Activated T-helper 1 cell treated with anti-CD3 and anti-CD28 coated beads, Interleukin-12 subunit alpha, Interleukin-12 subunit beta, Interleukin-2, Interleukin-4 antibody, amounts not matched to agents 30 ng/mL and 10 ng/mL and 1 ng/mL, durations not matched to agents 14 hours and 24 hours and 36 hours (primary cell): ENCODE measurements at regions of chr15 and their contacts with region 1.

Region 1: GRCh38 chr15:48861813-48862431 is 16.0 kb upstream of the EID1 start:
- DNase-seq: peak; percentile 25
- H3K4me3 Mint-ChIP-seq: no peak overlapping the region
- H3K27ac Mint-ChIP-seq: no peak overlapping the region
- H3K4me1 Mint-ChIP-seq: peaks cover 27% of the 10 kb centered on the region
- H3K27me3 Mint-ChIP-seq: peaks cover 6% of the 10 kb centered on the region

Region 2: GRCh38 chr15:48358229-48358641 is 503.7 kb before region 1 on chr15:
- intact Hi-C with region 1: loop called (anchors 5 kb)
- DNase-seq: no peak
- H3K4me3 Mint-ChIP-seq: no peak overlapping the region
- H3K27ac Mint-ChIP-seq: no peak overlapping the region
- H3K4me1 Mint-ChIP-seq: peaks cover 16% of the 10 kb centered on the region
- H3K27me3 Mint-ChIP-seq: peaks cover 6% of the 10 kb centered on the region

Region 3: DNA sequence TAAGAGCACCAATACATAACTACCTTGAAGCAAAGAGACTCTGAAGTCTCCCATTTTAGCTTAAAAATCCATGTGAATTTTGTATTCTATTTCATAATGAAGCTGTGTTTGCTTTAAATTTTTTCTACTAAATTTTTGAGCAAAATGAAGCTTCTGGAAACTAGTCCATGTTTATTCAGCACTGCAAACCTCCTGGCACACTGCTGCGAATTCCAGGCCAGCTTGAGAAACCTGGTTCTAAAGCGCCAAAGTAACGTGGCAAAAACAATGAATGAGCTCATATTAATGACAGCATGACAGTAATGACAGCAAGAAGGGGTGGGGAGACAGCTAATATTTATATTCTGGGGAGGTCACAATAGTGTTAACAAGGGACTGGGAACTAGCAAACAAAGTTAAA is 76.7 kb before region 1 on chr15:
- intact Hi-C with region 1: no loop called
- DNase-seq: no peak
- H3K4me3 Mint-ChIP-seq: no peak overlapping the region
- H3K27ac Mint-ChIP-seq: no peak overlapping the region
- H3K4me1 Mint-ChIP-seq: no peaks in the 10 kb centered on the region
- H3K27me3 Mint-ChIP-seq: no peaks in the 10 kb centered on the region

Region 4: GRCh38 chr15:48823237-48823636 is 38.7 kb before region 1 on chr15:
- intact Hi-C with region 1: no loop called
- DNase-seq: no peak
- H3K4me3 Mint-ChIP-seq: no peak overlapping the region
- H3K27ac Mint-ChIP-seq: no peak overlapping the region
- H3K4me1 Mint-ChIP-seq: no peaks in the 10 kb centered on the region
- H3K27me3 Mint-ChIP-seq: peaks cover 7% of the 10 kb centered on the region

Region 5: DNA sequence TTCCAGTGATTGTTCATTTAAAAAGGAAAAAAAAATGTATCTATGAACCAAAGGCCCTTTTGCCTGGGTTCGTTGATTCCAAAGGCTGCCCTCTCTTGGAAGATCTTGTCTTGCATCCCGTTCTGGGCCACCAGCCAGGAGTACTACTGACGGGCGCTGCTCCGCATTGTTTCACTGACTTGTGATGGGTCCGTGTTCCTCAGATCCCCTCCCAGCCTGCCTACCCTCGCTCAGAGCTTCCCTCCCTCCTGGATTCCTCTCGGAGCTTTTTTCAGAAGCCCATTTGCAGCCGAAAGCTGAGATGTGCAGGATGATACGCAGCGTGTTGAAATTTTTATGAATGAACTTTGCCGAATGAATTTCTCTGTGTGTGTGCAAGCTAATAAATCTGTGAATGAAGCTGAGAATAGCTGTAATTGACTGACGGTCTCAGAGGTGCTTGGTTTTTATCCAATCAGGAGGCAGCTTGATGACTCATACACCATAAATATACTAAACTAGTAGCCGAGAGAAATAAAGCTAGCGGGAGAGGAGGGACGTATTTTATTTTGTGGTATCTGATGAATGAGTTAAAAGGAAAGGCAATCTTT is 101.7 kb after region 1 on chr15 and contains the start of gene SHC4:
- intact Hi-C with region 1: loop called (anchors 1 kb)
- DNase-seq: no peak
- H3K4me3 Mint-ChIP-seq: peak within 1 kb of the TSS; percentile 84
- H3K27ac Mint-ChIP-seq: peak within 1 kb of the TSS; percentile 82
- H3K4me1 Mint-ChIP-seq: peaks cover 64% of the 10 kb centered on the region
- H3K27me3 Mint-ChIP-seq: peaks cover 11% of the 10 kb centered on the region
- total RNA-seq, gene SHC4: 25.7 and 26.4 TPM in 2 replicates

Region 6: GRCh38 chr15:49046220-49047102 is 184.5 kb after region 1 on chr15 and contains the start of gene SECISBP2L:
- intact Hi-C with region 1: loop called (anchors 1 kb)
- DNase-seq: peak; percentile 87
- H3K4me3 Mint-ChIP-seq: peak within 1 kb of the TSS; percentile 96
- H3K27ac Mint-ChIP-seq: peak within 1 kb of the TSS; percentile 91
- H3K4me1 Mint-ChIP-seq: peaks cover 35% of the 10 kb centered on the region
- H3K27me3 Mint-ChIP-seq: no peaks in the 10 kb centered on the region
- total RNA-seq, gene SECISBP2L: 38.0 and 44.8 TPM in 2 replicates

Region 7: DNA sequence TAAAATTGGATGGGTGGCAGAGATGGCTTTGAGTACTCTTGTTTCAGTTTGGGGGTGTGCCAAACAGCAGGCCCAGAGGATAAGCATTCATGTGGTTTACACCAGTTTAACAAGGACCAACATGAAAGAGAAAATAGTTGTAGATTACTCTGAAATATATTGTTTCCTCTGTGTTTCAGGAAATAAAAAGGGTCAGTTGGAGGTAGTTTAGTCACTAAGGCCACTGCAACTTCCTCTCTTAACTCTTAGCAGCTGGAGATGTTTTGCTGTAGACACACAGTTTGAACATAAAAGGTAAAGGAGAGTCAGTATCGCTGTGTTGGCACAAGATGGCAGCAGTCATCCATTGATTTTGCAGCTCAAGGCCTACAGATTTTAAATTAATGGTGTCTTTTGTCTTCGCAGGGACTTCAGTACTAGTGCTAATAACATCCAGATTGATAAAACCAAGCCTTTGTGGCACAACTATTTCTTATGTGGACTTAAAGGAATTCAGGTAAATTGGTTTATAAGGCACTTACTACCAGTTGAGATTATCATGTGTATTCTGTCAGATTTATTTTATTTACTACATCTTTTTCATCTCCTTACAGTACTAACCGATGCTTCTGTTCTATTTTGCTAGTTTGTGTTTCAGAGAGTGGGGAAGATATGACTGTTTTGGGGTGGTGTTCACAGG is 373.7 kb after region 1 on chr15:
- intact Hi-C with region 1: loop called (anchors 5 kb)
- DNase-seq: peak; percentile 30
- H3K4me3 Mint-ChIP-seq: no peak overlapping the region
- H3K27ac Mint-ChIP-seq: peak overlapping the region; percentile 11
- H3K4me1 Mint-ChIP-seq: peaks cover 12% of the 10 kb centered on the region
- H3K27me3 Mint-ChIP-seq: no peaks in the 10 kb centered on the region

Region 8: GRCh38 chr15:50145451-50145872 is 1283.5 kb after region 1 on chr15:
- intact Hi-C with region 1: loop called (anchors 5 kb)
- DNase-seq: no peak
- H3K4me3 Mint-ChIP-seq: no peak overlapping the region
- H3K27ac Mint-ChIP-seq: no peak overlapping the region
- H3K4me1 Mint-ChIP-seq: peaks cover 62% of the 10 kb centered on the region
- H3K27me3 Mint-ChIP-seq: no peaks in the 10 kb centered on the region